Body of pancreas (tissue), 4 donors: ENCODE measurements at regions of chr3 and their contacts with region 1.

Region 1: DNA sequence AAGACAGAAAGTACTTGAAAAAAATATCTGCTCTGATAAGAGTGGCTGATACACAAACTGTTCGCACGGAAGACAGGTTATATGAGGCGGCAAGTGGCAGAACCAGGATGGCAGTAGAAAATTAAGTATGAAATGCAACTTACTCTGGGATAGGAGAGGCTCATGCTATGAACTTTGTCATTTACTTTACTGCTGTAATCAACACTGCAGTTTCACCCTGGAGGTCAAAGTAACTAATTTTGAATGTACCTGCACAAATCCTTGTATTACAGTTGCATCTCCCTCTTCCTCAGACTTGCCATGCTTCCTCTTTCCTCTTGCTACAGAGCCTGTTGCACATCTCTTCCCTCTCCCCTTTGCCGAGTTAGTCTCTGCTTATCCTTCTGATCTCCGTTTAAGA is 38.8 kb downstream of the HACL1 start:
- DNase-seq: no peak
- ATAC-seq: no peak
- H3K4me3 ChIP-seq: no peak overlapping the region
- H3K27ac ChIP-seq: no peak overlapping the region
- H3K4me1 ChIP-seq: no peaks in the 10 kb centered on the region
- H3K27me3 ChIP-seq: no peaks in the 10 kb centered on the region
- CTCF ChIP-seq: no peak
- POLR2A ChIP-seq: no peak

Region 2: GRCh38 chr3:15439476-15439875 is 123.1 kb before region 1 on chr3:
- intact Hi-C with region 1: loop called (anchors 10 kb)
- DNase-seq: peak in 1 of 4 donors; percentile 17
- ATAC-seq: no peak
- H3K4me3 ChIP-seq: no peak overlapping the region
- H3K27ac ChIP-seq: no peak overlapping the region
- H3K4me1 ChIP-seq: no peaks in the 10 kb centered on the region
- H3K27me3 ChIP-seq: no peaks in the 10 kb centered on the region
- CTCF ChIP-seq: no peak
- POLR2A ChIP-seq: no peak